Panc1 (cell line): ENCODE measurements at regions of chr7 and their contacts with region 1.

Region 1: GRCh38 chr7:43711503-43711902 is 17.8 kb downstream of the COA1 start:
- DNase-seq: no peak
- ATAC-seq: no peak
- H3K4me3 ChIP-seq: no peak overlapping the region
- H3K27ac ChIP-seq: no peak overlapping the region
- H3K4me1 ChIP-seq: no peaks in the 10 kb centered on the region
- H3K27me3 ChIP-seq: no peaks in the 10 kb centered on the region
- CTCF ChIP-seq: no peak

Region 2: DNA sequence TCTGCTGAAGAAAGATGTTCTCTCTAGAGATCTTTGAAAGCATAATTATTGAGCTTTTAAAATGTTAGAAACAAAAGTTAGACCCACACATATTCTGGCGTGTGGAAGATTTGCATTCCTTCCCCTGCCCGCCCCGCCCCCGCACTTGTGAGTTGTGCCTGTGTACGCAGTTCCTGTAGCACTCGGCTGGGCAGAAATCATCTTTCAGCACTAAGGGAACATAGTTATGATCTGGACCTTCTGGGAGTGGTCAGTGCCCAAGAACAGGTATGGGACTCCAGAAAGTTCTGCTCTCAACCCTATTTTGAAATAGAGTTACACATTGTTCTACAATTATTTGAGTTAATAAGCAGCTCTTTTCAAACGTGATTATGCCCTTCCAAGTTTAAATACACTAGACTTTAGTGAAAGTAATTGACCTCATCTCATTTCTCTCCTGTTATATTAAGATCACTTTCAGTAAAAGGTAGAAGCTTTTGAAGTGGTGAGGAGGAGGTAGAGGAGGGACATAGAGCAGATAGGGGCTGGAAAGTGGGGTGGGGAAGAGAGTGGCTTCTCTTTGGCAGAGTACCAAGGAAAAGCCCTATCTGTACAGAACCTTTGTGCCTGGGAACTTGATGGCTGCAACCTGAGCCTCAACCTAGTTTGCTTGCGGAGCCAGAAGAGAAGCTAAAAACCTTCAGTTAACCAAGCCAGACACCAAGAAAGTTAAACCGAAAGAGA is 52.7 kb after region 1 on chr7:
- CTCF ChIA-PET with region 1: no interaction called
- POLR2A ChIA-PET with region 1: interaction called, 14 read pairs
- in situ Hi-C with region 1: no loop called
- intact Hi-C with region 1: no loop called
- DNase-seq: no peak
- ATAC-seq: peak; percentile 69
- H3K4me3 ChIP-seq: peak overlapping the region in 1 of 2 experiments; percentile 49; a peak in 3 of 4 replicates
- H3K27ac ChIP-seq: peak overlapping the region; percentile 40
- H3K4me1 ChIP-seq: peaks cover 55% of the 10 kb centered on the region
- H3K27me3 ChIP-seq: no peaks in the 10 kb centered on the region
- CTCF ChIP-seq: no peak

Region 3: DNA sequence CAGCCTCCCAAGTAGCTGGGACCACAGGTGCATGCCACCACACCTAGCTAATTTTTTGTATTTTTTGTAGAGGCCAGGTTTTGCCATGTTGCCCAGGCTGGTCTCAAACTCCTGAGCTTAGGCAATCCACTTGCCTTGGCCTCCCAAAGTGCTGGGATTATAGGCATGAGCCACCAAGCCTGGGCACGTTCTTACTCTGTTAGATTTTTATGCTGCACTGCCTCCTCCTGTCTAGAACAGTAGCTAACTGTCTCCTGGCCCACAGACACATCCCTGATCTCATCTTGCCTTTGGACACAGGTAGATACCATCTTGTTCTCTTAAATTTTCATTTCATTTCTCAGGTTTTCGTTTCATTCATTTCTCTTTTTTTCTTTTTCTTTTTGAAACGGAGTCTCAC is 88.1 kb after region 1 on chr7:
- CTCF ChIA-PET with region 1: no interaction called
- POLR2A ChIA-PET with region 1: no interaction called
- in situ Hi-C with region 1: no loop called
- intact Hi-C with region 1: no loop called
- DNase-seq: no peak
- ATAC-seq: peak; percentile 66
- H3K4me3 ChIP-seq: no peak overlapping the region
- H3K27ac ChIP-seq: no peak overlapping the region
- H3K4me1 ChIP-seq: no peaks in the 10 kb centered on the region
- H3K27me3 ChIP-seq: no peaks in the 10 kb centered on the region
- CTCF ChIP-seq: no peak

Region 4: DNA sequence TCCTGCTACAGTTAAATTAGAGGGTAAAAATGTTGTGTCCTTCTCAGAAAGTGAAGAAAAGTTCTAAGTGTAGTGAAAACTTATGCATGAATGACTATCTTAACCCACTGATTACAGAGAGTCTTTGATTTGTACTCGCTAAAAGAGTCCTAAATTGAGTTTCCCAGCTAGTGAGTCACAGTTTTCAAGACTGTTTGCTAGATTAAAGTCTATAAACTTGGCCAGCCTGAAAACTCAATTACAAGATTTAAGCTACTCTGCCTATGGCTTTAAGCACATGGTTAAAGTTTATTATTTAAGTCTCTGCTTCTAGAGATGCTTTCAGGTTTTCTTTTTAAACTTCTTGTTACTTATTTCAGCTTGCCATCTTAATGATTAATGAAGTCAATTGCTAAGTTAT is 113.5 kb after region 1 on chr7:
- CTCF ChIA-PET with region 1: no interaction called
- POLR2A ChIA-PET with region 1: no interaction called
- in situ Hi-C with region 1: no loop called
- intact Hi-C with region 1: no loop called
- DNase-seq: no peak
- ATAC-seq: no peak
- H3K4me3 ChIP-seq: no peak overlapping the region
- H3K27ac ChIP-seq: no peak overlapping the region
- H3K4me1 ChIP-seq: peaks cover 6% of the 10 kb centered on the region; the same call in 1 of the 2 replicates
- H3K27me3 ChIP-seq: no peaks in the 10 kb centered on the region; the same call in 1 of the 2 replicates
- CTCF ChIP-seq: no peak

Region 5: DNA sequence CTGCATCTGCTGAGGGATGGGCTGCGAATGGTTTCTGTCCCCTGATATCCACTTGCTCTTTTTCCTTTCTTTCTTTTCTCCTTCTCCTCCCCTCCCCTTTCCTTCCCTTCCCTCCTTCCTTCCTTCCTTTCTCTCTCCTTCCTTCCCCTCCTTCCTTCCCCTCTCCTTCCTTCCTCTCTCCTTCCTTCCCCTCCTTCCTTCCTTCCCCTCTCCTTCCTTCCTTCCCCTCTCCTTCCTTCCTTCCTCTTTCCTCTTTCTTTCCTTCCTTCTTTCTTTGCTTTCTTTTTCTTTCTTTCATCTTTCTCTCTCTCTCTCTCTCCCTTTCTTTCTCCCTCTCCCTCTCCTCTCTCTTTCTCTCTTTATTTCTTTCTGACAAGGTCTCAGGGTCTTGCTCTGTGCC is 266.0 kb after region 1 on chr7:
- CTCF ChIA-PET with region 1: no interaction called
- POLR2A ChIA-PET with region 1: interaction called, 13 read pairs
- in situ Hi-C with region 1: no loop called
- intact Hi-C with region 1: no loop called
- DNase-seq: no peak
- ATAC-seq: no peak
- H3K4me3 ChIP-seq: no peak overlapping the region
- H3K27ac ChIP-seq: no peak overlapping the region
- H3K4me1 ChIP-seq: no peaks in the 10 kb centered on the region
- H3K27me3 ChIP-seq: no peaks in the 10 kb centered on the region
- CTCF ChIP-seq: no peak